OCI-LY7 (cell line): ENCODE measurements at regions of chr2 and their contacts with region 1.

Region 1: GRCh38 chr2:157043786-157044185 is 213.7 kb upstream of the GALNT5 start:
- DNase-seq: no peak
- H3K4me3 ChIP-seq: no peak overlapping the region
- H3K27ac ChIP-seq: no peak overlapping the region
- H3K4me1 ChIP-seq: no peaks in the 10 kb centered on the region
- CTCF ChIP-seq: no peak

Region 2: DNA sequence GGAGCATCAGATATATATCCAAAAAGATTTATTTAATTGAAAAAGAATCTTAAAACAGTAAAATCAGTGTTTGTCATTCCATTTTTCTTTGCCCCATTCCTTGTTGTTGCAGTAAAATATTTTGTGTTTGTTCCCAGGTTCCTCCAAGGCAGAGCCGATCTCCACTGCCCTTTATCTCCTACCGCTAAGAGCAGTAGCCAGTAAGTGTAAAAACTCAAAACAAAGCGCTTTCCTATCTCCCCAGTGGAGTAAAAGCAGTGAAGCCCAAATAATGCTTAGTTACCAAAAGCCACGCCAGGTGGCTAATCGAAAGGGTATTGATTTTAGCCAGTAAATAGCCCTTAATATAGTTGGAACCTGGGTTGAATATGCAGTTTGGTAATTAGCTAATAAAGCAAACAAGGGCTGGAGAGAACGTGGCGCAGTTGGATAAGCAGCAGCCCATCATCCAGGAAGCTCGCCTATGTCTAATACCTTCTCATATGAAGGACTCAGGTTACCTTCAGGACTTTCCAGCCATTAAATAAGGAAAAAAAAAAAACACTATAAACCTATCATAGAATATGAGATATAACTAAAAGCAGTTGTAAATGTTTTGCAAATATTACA is 620.0 kb before region 1 on chr2:
- CTCF ChIA-PET with region 1: no interaction called
- POLR2A ChIA-PET with region 1: no interaction called
- intact Hi-C with region 1: loop called (anchors 5 kb)
- DNase-seq: no peak
- H3K4me3 ChIP-seq: no peak overlapping the region
- H3K27ac ChIP-seq: no peak overlapping the region
- H3K4me1 ChIP-seq: no peaks in the 10 kb centered on the region
- CTCF ChIP-seq: no peak

Region 3: GRCh38 chr2:157032017-157032416 is 11.8 kb before region 1 on chr2:
- CTCF ChIA-PET with region 1: no interaction called
- POLR2A ChIA-PET with region 1: no interaction called
- intact Hi-C with region 1: no loop called
- DNase-seq: no peak
- H3K4me3 ChIP-seq: no peak overlapping the region
- H3K27ac ChIP-seq: no peak overlapping the region
- H3K4me1 ChIP-seq: no peaks in the 10 kb centered on the region
- CTCF ChIP-seq: no peak